H1 (cell line): ENCODE measurements at regions of chr3 and their contacts with region 1.

Region 1: GRCh38 chr3:70090322-70090913 is 90.9 kb downstream of the SAMMSON start:
- DNase-seq: no peak
- H3K4me3 ChIP-seq: no peak overlapping the region
- H3K27ac ChIP-seq: no peak overlapping the region
- H3K4me1 ChIP-seq: no peaks in the 10 kb centered on the region
- H3K27me3 ChIP-seq: no peaks in the 10 kb centered on the region
- CTCF ChIP-seq: peak in 2 of 3 experiments; percentile 17 to 62; a peak in 2 of 4 replicates
- EP300 ChIP-seq: no peak
- POLR2A ChIP-seq: no peak
- RAD21 ChIP-seq: peak; percentile 67 to 75

Region 2: DNA sequence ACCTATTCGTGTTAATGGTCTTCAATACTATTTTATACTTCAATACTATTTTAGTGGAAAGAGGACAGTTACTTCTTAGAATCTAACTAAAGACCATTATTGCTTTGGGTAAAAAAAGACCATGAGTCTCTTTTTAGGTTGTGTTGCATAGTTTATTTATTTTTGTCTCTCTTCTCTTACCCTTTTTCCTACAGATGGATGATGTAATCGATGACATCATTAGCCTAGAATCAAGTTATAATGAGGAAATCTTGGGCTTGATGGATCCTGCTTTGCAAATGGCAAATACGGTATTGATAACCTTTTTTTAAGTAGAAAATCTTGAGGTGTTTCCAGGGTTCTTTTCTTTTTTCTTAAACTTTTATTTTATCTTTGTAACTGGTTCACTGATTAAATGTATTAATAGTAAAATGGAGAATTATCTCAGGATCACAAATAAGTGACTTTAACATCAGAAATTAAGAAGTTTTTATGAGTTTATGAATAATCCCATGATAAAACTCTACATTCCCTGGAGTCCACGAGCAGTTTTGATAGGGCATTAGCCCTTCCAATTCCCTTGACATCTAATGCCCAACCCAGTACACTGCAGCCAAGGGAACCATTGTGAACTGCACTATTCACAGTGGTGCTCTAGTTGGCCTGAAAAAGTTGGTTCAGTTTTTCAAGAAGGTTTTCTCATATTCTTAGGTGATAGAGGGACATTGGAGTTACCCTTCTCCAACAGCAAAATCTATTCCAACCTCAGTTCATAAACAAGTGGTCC is 149.2 kb before region 1 on chr3:
- CTCF ChIA-PET with region 1: no interaction called
- POLR2A ChIA-PET with region 1: no interaction called
- DNase-seq: no peak
- H3K4me3 ChIP-seq: no peak overlapping the region
- H3K27ac ChIP-seq: no peak overlapping the region
- H3K4me1 ChIP-seq: peaks cover 0 to 6% (median 0%) of the 10 kb centered on the region in 4 experiments; a peak in 1 of 7 replicates
- H3K27me3 ChIP-seq: no peaks in the 10 kb centered on the region
- CTCF ChIP-seq: no peak
- EP300 ChIP-seq: no peak
- POLR2A ChIP-seq: no peak
- RAD21 ChIP-seq: no peak

Region 3: GRCh38 chr3:70064194-70064779 is 26.1 kb before region 1 on chr3:
- CTCF ChIA-PET with region 1: interaction called, 16 read pairs
- POLR2A ChIA-PET with region 1: interaction called, 3 read pairs
- DNase-seq: no peak
- H3K4me3 ChIP-seq: no peak overlapping the region
- H3K27ac ChIP-seq: no peak overlapping the region
- H3K4me1 ChIP-seq: no peaks in the 10 kb centered on the region
- H3K27me3 ChIP-seq: no peaks in the 10 kb centered on the region
- CTCF ChIP-seq: peak in 2 of 3 experiments; percentile 51 to 72; a peak in 2 of 4 replicates
- EP300 ChIP-seq: no peak
- POLR2A ChIP-seq: no peak
- RAD21 ChIP-seq: peak; percentile 83 to 85

Region 4: DNA sequence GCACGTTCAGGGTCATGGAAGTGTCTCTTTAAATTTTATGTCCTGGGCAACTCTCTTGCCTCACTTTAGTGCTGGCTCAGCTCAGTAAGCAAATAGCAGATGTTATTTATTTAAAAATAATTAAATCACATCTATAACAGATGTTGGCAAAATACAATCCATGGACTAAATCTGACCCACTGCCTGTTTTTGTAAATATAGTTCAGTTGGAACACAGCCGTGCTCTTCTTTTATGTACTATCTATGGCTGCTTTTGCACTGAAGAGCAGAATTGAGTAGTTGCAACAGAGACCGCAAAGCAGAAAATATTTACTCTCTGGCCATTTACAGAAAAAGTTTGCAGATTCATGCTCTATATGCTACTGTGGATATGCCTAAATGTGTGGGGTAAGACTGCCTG is 11.6 kb before region 1 on chr3:
- CTCF ChIA-PET with region 1: interaction called, 12 read pairs
- POLR2A ChIA-PET with region 1: no interaction called
- DNase-seq: no peak
- H3K4me3 ChIP-seq: no peak overlapping the region
- H3K27ac ChIP-seq: no peak overlapping the region
- H3K4me1 ChIP-seq: peaks cover 0 to 2% (median 0%) of the 10 kb centered on the region in 4 experiments; a peak in 1 of 7 replicates
- H3K27me3 ChIP-seq: no peaks in the 10 kb centered on the region
- CTCF ChIP-seq: no peak
- EP300 ChIP-seq: no peak
- POLR2A ChIP-seq: no peak
- RAD21 ChIP-seq: no peak

Region 5: DNA sequence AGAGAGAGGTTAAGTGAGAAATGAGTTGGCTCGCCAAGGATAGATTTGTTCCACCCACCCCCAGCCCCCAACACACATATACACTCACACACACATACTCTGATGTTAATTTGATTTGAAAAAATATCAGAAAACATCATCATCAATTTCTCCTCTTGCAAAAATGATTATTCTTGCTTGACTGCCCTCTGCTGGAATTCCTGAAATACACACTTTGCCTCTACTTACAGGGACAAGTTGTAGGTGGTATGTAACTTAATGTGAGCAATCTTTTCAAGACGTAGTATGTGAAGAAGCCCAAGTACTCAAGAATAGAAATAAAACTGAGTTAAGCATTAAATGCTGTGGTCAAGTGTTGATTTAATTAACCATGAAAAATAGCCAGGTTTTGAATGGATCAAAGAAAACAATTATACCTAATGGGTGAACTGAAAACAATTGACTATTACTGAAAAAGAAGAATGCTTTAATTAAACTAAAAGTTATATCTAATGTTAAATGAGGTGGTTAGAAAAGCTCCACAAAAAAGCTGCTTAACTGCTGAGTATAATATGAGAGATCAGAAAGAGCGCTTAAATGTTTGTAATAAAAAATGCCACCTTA is 268.7 kb after region 1 on chr3:
- CTCF ChIA-PET with region 1: interaction called, 26 read pairs
- POLR2A ChIA-PET with region 1: no interaction called
- DNase-seq: no peak
- H3K4me3 ChIP-seq: no peak overlapping the region
- H3K27ac ChIP-seq: no peak overlapping the region
- H3K4me1 ChIP-seq: no peaks in the 10 kb centered on the region
- H3K27me3 ChIP-seq: no peaks in the 10 kb centered on the region
- CTCF ChIP-seq: peak in 2 of 3 experiments; percentile 39 to 65; a peak in 2 of 4 replicates
- EP300 ChIP-seq: no peak
- POLR2A ChIP-seq: no peak
- RAD21 ChIP-seq: peak; percentile 65 to 70